Activated CD4-positive, alpha-beta memory T cell treated with anti-CD3 and anti-CD28 coated beads for 36 hours (primary cell): ENCODE measurements at regions of chr1 and their contacts with region 1.

Region 1: DNA sequence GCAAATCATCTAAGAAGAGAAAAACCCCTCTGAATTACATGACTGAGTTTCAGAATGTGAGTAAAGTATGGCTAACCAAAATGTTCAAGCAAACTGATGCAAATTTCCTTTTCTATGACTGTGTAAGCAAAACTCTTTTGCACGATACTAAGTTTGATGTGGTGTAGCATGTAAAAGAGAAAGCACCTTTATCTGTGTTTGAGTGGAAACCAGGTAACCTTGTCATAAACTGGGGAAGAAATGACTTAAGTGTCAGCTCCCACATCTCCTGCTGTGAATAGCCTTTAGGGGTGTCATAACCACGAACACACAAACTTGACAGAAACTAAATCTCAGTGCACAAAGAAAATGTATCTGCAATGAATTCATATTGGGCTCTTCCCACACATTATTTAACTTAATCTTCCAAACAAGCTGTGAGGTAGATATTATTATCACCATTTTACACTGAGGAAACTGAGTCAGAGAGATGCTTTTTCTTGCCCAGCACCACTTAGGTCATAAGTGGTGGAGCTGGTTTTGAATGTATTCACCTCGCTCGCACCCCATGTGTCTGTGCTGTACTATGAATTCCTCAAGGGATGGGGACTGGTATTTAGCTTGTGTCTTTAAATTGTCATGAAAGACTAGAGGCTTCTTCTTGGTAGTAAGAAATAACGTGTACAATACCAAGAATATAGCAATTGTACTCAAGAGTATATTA is 32.9 kb upstream of the IL12RB2 start:
- DNase-seq: peak; percentile 27
- H3K4me3 Mint-ChIP-seq: no peak overlapping the region
- H3K27ac Mint-ChIP-seq: peak overlapping the region; percentile 75
- H3K4me1 Mint-ChIP-seq: peaks cover 51% of the 10 kb centered on the region
- H3K27me3 Mint-ChIP-seq: peaks cover 2% of the 10 kb centered on the region

Region 2: GRCh38 chr1:67162957-67163356 is 111.8 kb before region 1 on chr1:
- CTCF ChIA-PET with region 1: no interaction called
- POLR2A ChIA-PET with region 1: interaction called, 3 read pairs
- intact Hi-C with region 1: loop called (anchors 1 kb)
- DNase-seq: peak; percentile 78
- H3K4me3 Mint-ChIP-seq: peak overlapping the region; percentile 30
- H3K27ac Mint-ChIP-seq: peak overlapping the region; percentile 73
- H3K4me1 Mint-ChIP-seq: peaks cover 56% of the 10 kb centered on the region
- H3K27me3 Mint-ChIP-seq: peaks cover 5% of the 10 kb centered on the region

Region 3: DNA sequence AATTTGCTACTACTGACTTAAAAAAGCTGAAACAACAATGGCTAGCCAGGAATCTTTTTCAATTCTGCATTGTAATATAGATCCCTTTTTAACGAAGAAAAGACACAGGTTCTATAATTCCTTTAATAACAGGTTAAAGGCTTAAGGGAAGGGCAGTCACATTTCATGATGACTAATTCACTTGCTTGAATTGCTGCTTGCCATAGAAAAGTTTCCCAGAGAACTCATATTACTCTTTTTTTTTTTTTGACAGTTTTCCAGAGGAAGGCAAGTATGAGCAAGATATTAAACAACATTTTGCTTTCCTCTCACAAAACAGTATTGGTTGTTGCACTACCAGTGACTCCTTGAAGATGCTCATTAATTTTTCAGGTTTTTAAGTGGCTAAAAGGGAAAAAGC is 47.6 kb before region 1 on chr1:
- CTCF ChIA-PET with region 1: no interaction called
- POLR2A ChIA-PET with region 1: no interaction called
- intact Hi-C with region 1: loop called (anchors 5 kb)
- DNase-seq: no peak
- H3K4me3 Mint-ChIP-seq: no peak overlapping the region
- H3K27ac Mint-ChIP-seq: no peak overlapping the region
- H3K4me1 Mint-ChIP-seq: peaks cover 6% of the 10 kb centered on the region
- H3K27me3 Mint-ChIP-seq: peaks cover 1% of the 10 kb centered on the region

Region 4: DNA sequence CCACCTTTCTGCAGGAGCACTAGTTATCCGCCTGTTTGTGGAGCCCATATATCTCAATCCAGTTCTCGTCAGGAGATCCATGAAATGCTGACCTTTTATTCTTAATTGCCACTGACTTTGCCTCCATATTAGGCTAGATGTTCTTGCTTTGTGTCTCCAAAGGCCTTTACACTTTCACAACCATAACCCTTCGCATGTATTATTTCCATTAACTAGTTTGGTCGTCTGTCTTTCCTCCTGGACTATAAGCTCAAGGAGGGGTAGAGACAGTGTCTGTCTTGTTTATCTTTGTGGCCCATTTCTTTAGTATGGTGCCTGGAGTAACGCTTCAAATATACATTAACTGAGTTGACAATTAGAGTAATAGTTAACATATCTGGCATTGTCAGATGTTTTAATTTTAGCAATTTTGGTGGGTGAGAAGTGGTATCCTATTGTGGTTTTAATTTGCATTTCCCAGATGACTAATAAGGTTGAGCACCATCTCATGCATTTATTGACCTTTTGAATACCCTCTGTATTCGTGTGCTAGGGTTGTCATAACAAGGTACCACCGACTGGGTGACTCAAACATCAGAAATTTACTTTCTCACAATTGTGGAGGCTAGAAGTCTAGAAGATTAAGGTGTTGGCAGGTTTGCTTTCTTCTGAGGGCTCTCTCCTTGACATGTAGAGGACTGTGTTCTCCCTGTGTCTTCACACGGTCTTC is 11.2 kb after region 1 on chr1:
- CTCF ChIA-PET with region 1: interaction called, 10 read pairs
- POLR2A ChIA-PET with region 1: interaction called, 4 read pairs
- intact Hi-C with region 1: loop called (anchors 1 kb)
- DNase-seq: no peak
- H3K4me3 Mint-ChIP-seq: no peak overlapping the region
- H3K27ac Mint-ChIP-seq: peak overlapping the region; percentile 41
- H3K4me1 Mint-ChIP-seq: peaks cover 26% of the 10 kb centered on the region
- H3K27me3 Mint-ChIP-seq: peaks cover 2% of the 10 kb centered on the region

Region 5: DNA sequence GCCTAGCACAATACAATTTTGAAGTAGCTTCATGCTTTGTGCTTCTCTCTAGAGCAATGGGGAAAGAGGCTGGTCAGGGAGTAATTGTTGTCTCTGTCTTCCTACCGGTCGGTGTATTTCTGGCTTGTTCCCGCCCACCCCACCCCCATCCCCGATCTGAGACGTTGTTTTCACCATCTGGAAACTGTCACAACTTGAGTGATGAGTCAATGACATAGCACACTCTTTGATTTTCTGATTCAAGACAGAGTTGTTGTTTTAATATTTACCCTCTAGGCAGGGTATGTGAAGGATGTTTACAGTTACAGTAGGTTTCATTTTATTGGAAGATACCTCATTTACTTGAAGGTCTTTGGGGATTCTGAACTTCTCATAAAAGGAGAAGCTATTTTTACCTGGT is 39.9 kb after region 1 on chr1:
- CTCF ChIA-PET with region 1: no interaction called
- POLR2A ChIA-PET with region 1: interaction called, 4 read pairs
- intact Hi-C with region 1: loop called (anchors 1 kb)
- DNase-seq: peak; percentile 53
- H3K4me3 Mint-ChIP-seq: peak overlapping the region; percentile 56
- H3K27ac Mint-ChIP-seq: peak overlapping the region; percentile 96
- H3K4me1 Mint-ChIP-seq: peaks cover 48% of the 10 kb centered on the region
- H3K27me3 Mint-ChIP-seq: no peaks in the 10 kb centered on the region

Region 6: GRCh38 chr1:67430352-67431155 is 155.8 kb after region 1 on chr1 and contains the start of gene SERBP1:
- CTCF ChIA-PET with region 1: no interaction called
- POLR2A ChIA-PET with region 1: interaction called, 5 read pairs
- intact Hi-C with region 1: loop called (anchors 2 kb)
- DNase-seq: peak; percentile 97
- H3K4me3 Mint-ChIP-seq: peak within 1 kb of the TSS; percentile 83
- H3K27ac Mint-ChIP-seq: peak within 1 kb of the TSS; percentile 97
- H3K4me1 Mint-ChIP-seq: peaks cover 50% of the 10 kb centered on the region
- H3K27me3 Mint-ChIP-seq: no peaks in the 10 kb centered on the region
- total RNA-seq, gene SERBP1: 388 to 398 TPM